H1 (cell line): ENCODE measurements at regions of chr16 and their contacts with region 1.

Region 1: DNA sequence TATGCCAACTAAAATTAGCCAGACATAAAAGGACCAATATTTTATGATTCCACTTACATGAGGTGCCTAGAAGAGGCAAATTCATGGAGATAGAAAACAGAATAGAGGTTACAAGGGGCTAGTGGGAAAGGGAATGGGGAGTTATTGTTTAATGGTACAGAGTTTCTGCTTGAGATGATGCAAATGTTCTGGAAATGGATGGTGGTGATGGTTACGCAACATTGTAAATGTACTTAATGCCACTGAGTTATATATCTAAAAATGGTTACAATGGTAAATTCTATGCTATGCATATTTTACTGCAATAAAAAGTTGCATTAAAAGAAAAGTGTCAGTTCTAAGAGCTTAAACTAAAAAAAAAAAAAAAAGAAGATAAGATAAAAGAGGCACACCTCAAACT is 17.9 kb downstream of the MT1X start:
- DNase-seq: no peak
- H3K4me3 ChIP-seq: no peak overlapping the region
- H3K27ac ChIP-seq: no peak overlapping the region
- H3K4me1 ChIP-seq: peaks cover 0 to 2% (median 0%) of the 10 kb centered on the region in 4 experiments; a peak in 1 of 7 replicates
- H3K27me3 ChIP-seq: no peaks in the 10 kb centered on the region; a peak in 2 of 7 replicates
- CTCF ChIP-seq: no peak
- EP300 ChIP-seq: no peak
- POLR2A ChIP-seq: no peak
- RAD21 ChIP-seq: no peak

Region 2: DNA sequence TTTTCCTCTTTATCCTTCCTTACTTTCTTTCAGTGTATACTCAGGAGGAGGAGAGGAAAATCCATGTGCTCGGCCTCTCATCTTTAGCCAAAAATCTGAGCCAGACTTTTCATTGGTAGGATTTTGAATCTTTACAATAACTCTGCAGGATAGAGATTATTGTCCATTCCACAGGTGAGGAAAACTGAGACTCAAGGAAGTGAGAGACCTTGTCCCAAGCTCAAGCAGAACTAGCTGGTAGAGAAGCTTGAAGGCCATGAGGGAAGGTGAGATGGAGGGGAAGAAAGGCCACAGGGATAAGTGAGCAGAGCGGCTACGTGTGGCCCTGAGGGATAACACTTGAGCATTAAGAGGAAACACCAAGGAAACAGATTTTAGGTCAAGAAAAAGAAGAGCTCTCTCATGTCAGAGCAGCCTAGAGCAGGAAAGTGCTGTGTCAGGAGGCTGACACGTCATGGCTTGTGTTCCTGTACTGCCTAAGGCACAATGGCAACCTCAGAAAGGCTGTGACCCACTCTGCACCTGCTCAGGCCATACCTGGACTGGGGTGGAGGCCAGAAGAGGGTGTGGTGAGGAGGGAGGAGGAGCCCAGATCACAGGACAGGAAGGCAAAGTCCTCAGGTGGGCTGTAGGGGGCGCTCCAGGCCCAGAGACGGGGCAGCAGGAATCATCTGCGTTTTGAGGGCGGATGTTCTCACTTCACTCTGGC is 123.5 kb before region 1 on chr16:
- CTCF ChIA-PET with region 1: interaction called, 27 read pairs
- POLR2A ChIA-PET with region 1: no interaction called
- DNase-seq: peak; percentile 67 to 94
- H3K4me3 ChIP-seq: no peak overlapping the region
- H3K27ac ChIP-seq: no peak overlapping the region
- H3K4me1 ChIP-seq: no peaks in the 10 kb centered on the region
- H3K27me3 ChIP-seq: no peaks in the 10 kb centered on the region; a peak in 1 of 7 replicates
- CTCF ChIP-seq: peak; percentile 92 to 98 (median 93)
- EP300 ChIP-seq: 0 out of 3 replicates have a peak, but pooled peaks of 1 of the 2 experiments have one; percentile 8
- POLR2A ChIP-seq: no peak
- RAD21 ChIP-seq: peak; percentile 97 to 99

Region 3: GRCh38 chr16:56625140-56625942 is 74.9 kb before region 1 on chr16 and contains the start of gene MT1E:
- CTCF ChIA-PET with region 1: interaction called, 13 read pairs
- POLR2A ChIA-PET with region 1: interaction called, 7 read pairs
- DNase-seq: peak in 1 of 2 experiments; percentile 66
- H3K4me3 ChIP-seq: peak within 1 kb of the TSS; percentile 26 to 61 (median 46)
- H3K27ac ChIP-seq: no peak within 1 kb of the TSS
- H3K4me1 ChIP-seq: peaks cover 0 to 17% (median 14%) of the 10 kb centered on the region in 4 experiments; a peak in 6 of 7 replicates
- H3K27me3 ChIP-seq: peaks cover 53 to 86% (median 82%) of the 10 kb centered on the region in 4 experiments
- CTCF ChIP-seq: no peak
- EP300 ChIP-seq: no peak
- POLR2A ChIP-seq: no peak
- RAD21 ChIP-seq: no peak
- total RNA-seq, gene MT1E: 3.5 and 7.9 TPM in 2 replicates

Region 4: DNA sequence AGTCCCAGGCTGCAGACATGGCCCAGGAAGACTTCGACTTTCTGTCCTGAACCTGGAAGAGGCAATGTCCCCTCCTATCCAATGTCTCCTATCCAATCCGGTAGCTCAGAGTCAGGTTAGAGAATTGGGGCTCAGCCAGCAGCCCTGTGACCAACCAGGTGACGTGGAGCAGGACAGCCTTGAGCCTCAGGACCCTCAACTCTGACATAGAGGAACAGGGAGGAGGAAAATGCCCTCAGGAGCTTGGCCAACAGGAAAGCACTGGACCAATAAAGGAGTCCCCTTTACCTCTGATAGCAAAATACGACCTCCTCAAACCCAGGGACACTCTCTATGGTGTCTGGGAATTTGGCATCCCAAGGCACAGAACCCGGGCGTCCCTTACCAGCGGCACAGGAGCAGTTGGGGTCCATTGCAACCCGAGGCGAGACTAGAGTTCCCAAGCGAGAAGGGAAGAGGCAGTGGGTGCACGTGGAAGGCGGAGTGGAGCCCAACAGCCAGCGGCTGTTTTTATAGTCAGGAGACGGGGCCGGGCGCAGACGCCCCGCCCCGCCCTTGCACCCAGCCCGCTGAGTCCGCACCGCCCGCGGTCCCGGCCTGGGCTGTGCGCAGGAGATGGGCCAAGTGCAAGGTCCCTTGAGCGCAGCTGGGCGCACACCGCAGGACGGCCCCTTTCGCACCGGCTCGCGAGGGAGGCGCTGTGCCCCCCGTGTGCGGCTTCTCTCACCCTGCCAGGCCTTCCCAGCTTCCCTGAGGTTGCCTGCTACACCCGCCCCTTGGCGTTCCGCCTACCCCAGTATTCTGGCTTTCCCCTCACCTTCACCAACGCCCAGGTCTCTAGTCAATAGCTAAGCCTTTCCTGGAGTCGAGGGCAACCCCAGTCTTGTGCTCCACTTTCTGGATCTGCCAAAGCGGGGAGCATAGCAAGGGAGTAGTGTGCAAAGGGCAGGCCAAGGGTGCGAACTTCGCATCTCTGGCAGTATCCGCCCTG is 32.3 kb before region 1 on chr16 and contains the start of gene MT1G:
- CTCF ChIA-PET with region 1: interaction called, 62 read pairs
- POLR2A ChIA-PET with region 1: interaction called, 24 read pairs
- DNase-seq: peak in 1 of 2 experiments; percentile 70
- H3K4me3 ChIP-seq: peak within 1 kb of the TSS; percentile 13 to 53 (median 16); a peak in 5 of 8 replicates
- H3K27ac ChIP-seq: no peak within 1 kb of the TSS
- H3K4me1 ChIP-seq: peaks cover 3 to 16% (median 12%) of the 10 kb centered on the region in 4 experiments
- H3K27me3 ChIP-seq: peaks cover 81 to 98% (median 93%) of the 10 kb centered on the region in 4 experiments
- CTCF ChIP-seq: no peak
- EP300 ChIP-seq: no peak
- POLR2A ChIP-seq: no peak
- RAD21 ChIP-seq: no peak
- total RNA-seq, gene MT1G: 17.7 and 19.7 TPM in 2 replicates

Region 5: DNA sequence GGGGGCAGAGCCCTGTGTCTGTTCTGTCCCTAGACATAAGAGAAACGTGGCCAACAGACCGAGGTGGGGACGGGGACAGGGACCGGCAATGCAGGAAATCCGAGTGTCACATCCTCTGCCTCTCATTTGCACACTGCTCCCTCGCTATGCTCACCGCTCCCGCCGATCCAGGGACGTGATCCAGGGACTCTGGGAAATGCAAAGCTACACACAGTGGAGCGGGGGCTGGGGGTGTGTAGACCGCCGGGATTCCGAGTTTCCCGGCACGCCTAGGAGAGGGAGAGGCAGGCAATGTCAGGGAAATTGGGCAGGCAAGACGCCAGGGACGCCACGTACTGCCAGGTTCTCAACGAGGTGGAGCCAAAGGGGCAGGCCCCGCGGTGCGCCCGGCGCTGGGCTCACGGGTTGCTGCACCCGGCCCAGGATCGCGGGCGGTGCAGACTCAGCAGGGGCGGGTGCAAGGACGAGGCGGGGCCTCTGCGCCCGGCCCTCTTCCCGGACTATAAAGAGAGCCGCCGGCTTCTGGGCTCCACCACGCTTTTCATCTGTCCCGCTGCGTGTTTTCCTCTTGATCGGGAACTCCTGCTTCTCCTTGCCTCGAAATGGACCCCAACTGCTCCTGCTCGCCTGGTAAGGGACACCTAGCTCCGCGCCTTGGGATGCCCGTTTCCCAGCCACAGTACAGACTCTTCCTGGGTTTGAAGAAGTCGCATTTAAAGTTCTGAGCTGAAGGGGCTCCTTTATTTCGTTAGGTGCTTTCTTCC is 18.1 kb before region 1 on chr16 and contains the start of gene MT1X:
- CTCF ChIA-PET with region 1: interaction called, 57 read pairs
- POLR2A ChIA-PET with region 1: interaction called, 28 read pairs
- DNase-seq: peak in 1 of 2 experiments; percentile 76
- H3K4me3 ChIP-seq: peak within 1 kb of the TSS; percentile 57 to 77 (median 69)
- H3K27ac ChIP-seq: no peak within 1 kb of the TSS
- H3K4me1 ChIP-seq: peaks cover 0 to 19% (median 8%) of the 10 kb centered on the region in 4 experiments; a peak in 6 of 7 replicates
- H3K27me3 ChIP-seq: peaks cover 0 to 41% (median 24%) of the 10 kb centered on the region in 4 experiments; a peak in 5 of 7 replicates
- CTCF ChIP-seq: no peak
- EP300 ChIP-seq: no peak
- POLR2A ChIP-seq: peak in 1 of 2 experiments; percentile 61; a peak in 2 of 3 replicates
- RAD21 ChIP-seq: no peak
- total RNA-seq, gene MT1X: 52.4 and 64.5 TPM in 2 replicates

Region 6: DNA sequence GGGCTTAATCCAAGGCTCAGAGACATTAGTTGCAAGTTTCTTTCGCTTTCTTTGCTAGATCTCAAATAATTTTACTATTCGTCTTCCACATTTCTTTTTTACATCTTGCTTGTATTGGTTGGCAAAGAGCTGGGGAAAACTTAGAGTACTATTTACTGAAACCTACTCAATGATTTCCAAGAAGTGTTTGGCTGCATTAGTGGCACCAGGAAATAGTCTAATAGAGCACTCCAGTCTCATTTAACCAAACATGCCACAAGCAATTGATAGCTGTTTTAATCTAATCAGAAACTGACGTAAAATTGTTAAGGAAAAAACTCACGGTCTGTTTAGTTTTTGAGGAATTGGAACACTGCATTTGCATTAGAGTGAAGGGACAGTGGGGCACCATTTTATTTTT is 58.7 kb after region 1 on chr16:
- CTCF ChIA-PET with region 1: no interaction called
- POLR2A ChIA-PET with region 1: no interaction called
- DNase-seq: no peak
- H3K4me3 ChIP-seq: no peak overlapping the region
- H3K27ac ChIP-seq: no peak overlapping the region
- H3K4me1 ChIP-seq: no peaks in the 10 kb centered on the region
- H3K27me3 ChIP-seq: no peaks in the 10 kb centered on the region
- CTCF ChIP-seq: no peak
- EP300 ChIP-seq: no peak
- POLR2A ChIP-seq: no peak
- RAD21 ChIP-seq: no peak

Region 7: GRCh38 chr16:56789360-56789759 is 89.2 kb after region 1 on chr16:
- CTCF ChIA-PET with region 1: interaction called, 10 read pairs
- POLR2A ChIA-PET with region 1: no interaction called
- DNase-seq: no peak
- H3K4me3 ChIP-seq: no peak overlapping the region
- H3K27ac ChIP-seq: no peak overlapping the region
- H3K4me1 ChIP-seq: peaks cover 8 to 25% (median 21%) of the 10 kb centered on the region in 4 experiments
- H3K27me3 ChIP-seq: no peaks in the 10 kb centered on the region
- CTCF ChIP-seq: peak; percentile 12 to 32 (median 29); a peak in 3 of 4 replicates
- EP300 ChIP-seq: no peak
- POLR2A ChIP-seq: no peak
- RAD21 ChIP-seq: peak; percentile 41 to 59